GM12878 (cell line): ENCODE measurements at regions of chr5 and their contacts with region 1.

Region 1: GRCh38 chr5:73770172-73771025 is 144.4 kb downstream of the ARHGEF28 start:
- DNase-seq: no peak
- ATAC-seq: no peak
- H3K4me3 ChIP-seq: no peak overlapping the region
- H3K27ac ChIP-seq: no peak overlapping the region
- H3K4me1 ChIP-seq: no peaks in the 10 kb centered on the region
- H3K27me3 ChIP-seq: no peaks in the 10 kb centered on the region
- CTCF ChIP-seq: no peak
- EP300 ChIP-seq: no peak
- POLR2A ChIP-seq: no peak
- RAD21 ChIP-seq: no peak

Region 2: GRCh38 chr5:73370640-73371583 is 399.5 kb before region 1 on chr5:
- CTCF ChIA-PET with region 1: no interaction called
- POLR2A ChIA-PET with region 1: no interaction called
- RAD21 ChIA-PET with region 1: no interaction called
- SMC1A ChIA-PET with region 1: no interaction called
- in situ Hi-C with region 1: no loop called
- intact Hi-C with region 1: no loop called
- DNase-seq: no peak
- ATAC-seq: no peak
- H3K4me3 ChIP-seq: no peak overlapping the region
- H3K27ac ChIP-seq: no peak overlapping the region
- H3K4me1 ChIP-seq: no peaks in the 10 kb centered on the region
- H3K27me3 ChIP-seq: peaks cover 3 to 4% of the 10 kb centered on the region in 2 experiments; a peak in 2 of 4 replicates
- CTCF ChIP-seq: no peak
- EP300 ChIP-seq: no peak
- POLR2A ChIP-seq: no peak
- RAD21 ChIP-seq: no peak

Region 3: DNA sequence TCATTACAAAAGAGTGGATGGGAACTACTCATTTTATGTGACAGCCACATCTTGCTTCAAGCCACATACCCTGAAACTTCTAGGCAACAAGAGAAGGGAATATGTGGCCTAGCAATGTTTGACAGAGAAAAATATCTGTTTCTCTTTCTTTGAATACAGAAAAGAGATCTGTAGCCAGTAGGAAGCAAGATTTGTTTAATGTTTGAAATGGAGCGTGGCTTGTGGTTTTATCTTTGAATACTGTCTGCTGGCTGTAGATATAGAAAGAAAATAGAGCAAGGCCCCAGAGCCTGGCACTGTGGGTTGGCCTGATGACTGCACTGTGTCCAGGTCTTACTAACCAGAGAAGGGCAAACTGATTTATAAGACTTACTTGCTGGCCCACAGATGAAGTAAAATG is 10.6 kb before region 1 on chr5:
- CTCF ChIA-PET with region 1: interaction called, 5 read pairs
- POLR2A ChIA-PET with region 1: no interaction called
- RAD21 ChIA-PET with region 1: no interaction called
- SMC1A ChIA-PET with region 1: interaction called, 11 read pairs
- in situ Hi-C with region 1: no loop called
- intact Hi-C with region 1: no loop called
- DNase-seq: no peak
- ATAC-seq: peak; percentile 67
- H3K4me3 ChIP-seq: no peak overlapping the region
- H3K27ac ChIP-seq: no peak overlapping the region
- H3K4me1 ChIP-seq: no peaks in the 10 kb centered on the region
- H3K27me3 ChIP-seq: no peaks in the 10 kb centered on the region
- CTCF ChIP-seq: no peak
- EP300 ChIP-seq: no peak
- POLR2A ChIP-seq: no peak
- RAD21 ChIP-seq: no peak

Region 4: DNA sequence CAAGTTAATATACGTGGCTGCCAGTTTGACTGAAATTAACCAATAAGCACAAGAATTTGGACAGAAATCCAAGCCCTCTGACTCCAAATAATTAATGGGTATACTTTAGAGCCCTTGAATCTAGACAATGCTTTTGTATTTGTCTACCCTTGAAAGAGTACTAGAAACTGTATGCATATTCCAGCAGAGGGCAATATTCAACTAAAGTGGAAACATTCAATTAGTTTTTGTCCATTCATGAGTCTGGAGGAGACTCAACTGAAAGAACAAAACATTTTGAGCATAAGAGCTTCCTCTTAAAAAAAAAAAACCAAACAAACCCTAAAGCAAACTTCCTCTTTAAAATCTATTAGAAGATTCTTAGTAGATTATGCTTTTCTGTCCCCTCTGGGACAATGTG is 13.4 kb after region 1 on chr5:
- CTCF ChIA-PET with region 1: interaction called, 12 read pairs
- POLR2A ChIA-PET with region 1: no interaction called
- RAD21 ChIA-PET with region 1: interaction called, 4 read pairs
- SMC1A ChIA-PET with region 1: interaction called, 10 read pairs
- in situ Hi-C with region 1: no loop called
- intact Hi-C with region 1: no loop called
- DNase-seq: no peak
- ATAC-seq: peak; percentile 74
- H3K4me3 ChIP-seq: no peak overlapping the region
- H3K27ac ChIP-seq: no peak overlapping the region
- H3K4me1 ChIP-seq: no peaks in the 10 kb centered on the region
- H3K27me3 ChIP-seq: no peaks in the 10 kb centered on the region; a peak in 1 of 4 replicates
- CTCF ChIP-seq: peak; percentile 18 to 38 (median 29); a peak in 2 of 6 replicates
- EP300 ChIP-seq: no peak
- POLR2A ChIP-seq: no peak
- RAD21 ChIP-seq: no peak

Region 5: GRCh38 chr5:74316064-74316679 is 545.8 kb after region 1 on chr5:
- CTCF ChIA-PET with region 1: no interaction called
- POLR2A ChIA-PET with region 1: no interaction called
- RAD21 ChIA-PET with region 1: no interaction called
- SMC1A ChIA-PET with region 1: no interaction called
- in situ Hi-C with region 1: no loop called
- intact Hi-C with region 1: no loop called
- DNase-seq: peak; percentile 53
- ATAC-seq: peak; percentile 89
- H3K4me3 ChIP-seq: no peak overlapping the region
- H3K27ac ChIP-seq: peak overlapping the region; percentile 34; the same call in 1 of the 2 replicates
- H3K4me1 ChIP-seq: peaks cover 14% of the 10 kb centered on the region
- H3K27me3 ChIP-seq: no peaks in the 10 kb centered on the region
- CTCF ChIP-seq: no peak
- EP300 ChIP-seq: no peak
- POLR2A ChIP-seq: no peak
- RAD21 ChIP-seq: no peak